ENCODE measurements at regions of chr3 and their contacts with region 1.

Region 1: DNA sequence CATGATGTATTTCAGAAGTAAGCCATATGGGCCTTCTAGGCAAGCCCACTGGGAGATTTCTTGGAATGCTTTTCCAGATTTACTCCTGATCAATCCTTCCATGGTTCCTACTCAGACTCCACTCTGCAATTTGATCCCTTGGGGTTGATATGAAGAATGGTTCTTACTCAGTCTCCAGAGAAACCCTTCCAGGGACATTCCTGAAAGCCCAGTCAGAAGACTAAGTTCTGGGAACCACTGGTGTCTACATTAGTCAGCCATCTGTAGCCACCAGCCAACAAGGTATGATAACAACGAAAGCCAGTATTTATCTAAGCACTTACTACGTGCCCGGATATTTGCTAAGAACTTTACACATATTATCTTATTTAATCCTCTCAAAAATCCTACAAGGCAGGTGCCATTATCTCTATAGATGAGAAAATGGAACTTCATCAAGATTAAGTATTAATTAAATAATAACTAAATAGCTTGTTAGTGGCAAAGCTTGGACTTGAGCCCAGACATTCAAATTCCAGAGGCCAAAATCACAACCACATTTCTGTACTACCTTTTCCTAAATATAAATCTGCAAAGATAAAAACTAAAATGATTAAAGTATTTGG is 32.7 kb downstream of the ZNF385D start:
- DNase-seq: no peak
- ATAC-seq: peak; percentile 83
- H3K4me3 ChIP-seq: no peak overlapping the region
- H3K27ac ChIP-seq: peak overlapping the region; percentile 81 to 82
- H3K4me1 ChIP-seq: peaks cover 11 to 30% of the 10 kb centered on the region in 2 donors
- H3K27me3 ChIP-seq: no peaks in the 10 kb centered on the region

Region 2: GRCh38 chr3:21587894-21588293 is 130.4 kb before region 1 on chr3:
- intact Hi-C with region 1: loop called in 1 of 2 experiments (anchors 5 kb)
- DNase-seq: no peak
- ATAC-seq: no peak
- H3K4me3 ChIP-seq: no peak overlapping the region
- H3K27ac ChIP-seq: no peak overlapping the region
- H3K4me1 ChIP-seq: peaks cover 0 to 3% of the 10 kb centered on the region in 2 donors
- H3K27me3 ChIP-seq: no peaks in the 10 kb centered on the region

Region 3: DNA sequence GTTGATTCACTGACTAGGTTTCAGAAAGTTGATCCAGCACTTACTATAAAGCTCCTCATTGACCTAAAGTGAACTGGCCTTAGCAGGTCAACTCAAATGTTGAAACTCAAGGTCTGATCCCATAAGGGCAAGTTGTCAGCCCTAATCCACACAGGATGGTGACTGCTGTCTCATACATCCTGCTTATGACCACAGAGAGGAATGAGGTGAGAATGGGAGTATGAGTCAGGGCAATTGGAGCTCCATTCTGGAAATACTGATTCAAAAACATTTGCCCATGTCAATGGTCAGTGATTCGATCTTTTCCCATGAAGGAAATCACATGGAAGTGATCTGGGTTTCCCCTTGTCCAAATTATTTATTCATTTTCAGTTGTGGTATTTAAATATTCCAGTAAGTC is 46.0 kb before region 1 on chr3:
- intact Hi-C with region 1: loop called in 1 of 2 experiments (anchors 5 kb)
- DNase-seq: no peak
- ATAC-seq: no peak
- H3K4me3 ChIP-seq: no peak overlapping the region
- H3K27ac ChIP-seq: peak overlapping the region in 1 of 2 donors; percentile 78
- H3K4me1 ChIP-seq: peaks cover 4 to 9% of the 10 kb centered on the region in 2 donors
- H3K27me3 ChIP-seq: no peaks in the 10 kb centered on the region

Measured in aorta (tissue), 5 donors.